CD4-positive, alpha-beta memory T cell (primary cell): ENCODE measurements at regions of chrX and their contacts with region 1.

Region 1: DNA sequence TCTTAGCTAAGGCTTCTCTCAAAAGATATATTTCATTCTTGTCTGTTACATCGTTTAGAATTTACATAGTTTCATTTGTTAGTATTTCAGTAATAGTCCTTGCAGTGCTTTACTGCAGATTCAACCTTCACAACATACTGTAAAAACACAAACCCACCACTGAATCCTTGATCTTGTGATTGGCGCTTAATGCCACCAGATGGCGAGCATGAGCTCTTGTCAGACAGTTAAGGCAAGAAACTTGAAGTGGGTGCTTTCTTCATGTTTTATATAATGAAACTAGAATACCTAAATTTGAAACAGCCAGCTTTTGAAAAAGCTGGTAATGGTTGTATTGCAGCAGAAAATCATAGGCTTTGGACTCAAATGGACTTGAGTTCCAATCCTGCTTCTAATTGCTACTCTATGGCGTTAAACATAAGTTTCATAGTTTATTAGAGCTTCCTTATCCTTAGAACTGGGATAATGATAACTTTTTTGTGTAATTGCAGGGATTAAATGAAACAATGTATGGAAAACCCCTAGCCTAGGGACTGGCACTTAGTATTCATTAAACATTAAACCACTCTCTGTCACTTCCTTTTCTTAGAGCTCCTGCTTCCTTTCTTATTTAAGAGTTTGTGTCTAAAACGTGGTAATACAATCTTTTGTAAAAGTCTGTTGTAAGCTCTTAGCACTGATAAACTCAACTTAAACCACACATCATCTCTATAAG is 95.1 kb downstream of the USP9X start:
- DNase-seq: peak; percentile 47 to 60 (median 55)
- H3K4me3 ChIP-seq: no peak overlapping the region
- H3K4me3 Mint-ChIP-seq: peak overlapping the region in 2 of 8 donors; percentile 30 to 32
- H3K27ac ChIP-seq: no peak overlapping the region
- H3K27ac Mint-ChIP-seq: peak overlapping the region in 6 of 7 donors; percentile 0 to 41 (median 28)
- H3K4me1 ChIP-seq: peaks cover 21% of the 10 kb centered on the region
- H3K4me1 Mint-ChIP-seq: peaks cover 32 to 48% (median 40%) of the 10 kb centered on the region in 4 donors
- H3K27me3 ChIP-seq: no peaks in the 10 kb centered on the region
- H3K27me3 Mint-ChIP-seq: no peaks in the 10 kb centered on the region

Region 2: DNA sequence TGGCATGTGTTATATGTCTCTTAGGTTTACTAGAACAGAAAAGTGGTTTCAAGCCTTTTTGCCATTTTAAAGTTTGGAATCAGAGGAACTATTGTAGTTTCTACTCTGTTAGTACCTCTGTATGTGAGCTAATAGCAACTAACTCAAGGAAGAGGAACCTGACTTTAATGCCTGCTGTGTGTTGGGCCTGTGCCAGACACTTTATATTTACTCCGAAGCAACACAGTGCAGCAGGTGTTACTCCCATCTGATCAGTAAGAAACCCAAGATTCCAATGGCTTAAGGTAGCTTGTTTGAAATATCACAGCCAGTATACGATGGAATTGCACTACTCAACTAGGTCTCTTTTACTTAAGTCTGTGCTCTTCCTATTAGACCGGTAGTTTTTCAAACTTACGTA is 15.9 kb before region 1 on chrX:
- CTCF ChIA-PET with region 1: interaction called, 20 read pairs
- POLR2A ChIA-PET with region 1: no interaction called
- intact Hi-C with region 1: no loop called
- DNase-seq: no peak
- H3K4me3 ChIP-seq: no peak overlapping the region
- H3K4me3 Mint-ChIP-seq: no peak overlapping the region
- H3K27ac ChIP-seq: no peak overlapping the region
- H3K27ac Mint-ChIP-seq: no peak overlapping the region
- H3K4me1 ChIP-seq: no peaks in the 10 kb centered on the region
- H3K4me1 Mint-ChIP-seq: peaks cover 0 to 5% (median under 1%) of the 10 kb centered on the region in 4 donors
- H3K27me3 ChIP-seq: no peaks in the 10 kb centered on the region
- H3K27me3 Mint-ChIP-seq: no peaks in the 10 kb centered on the region

Region 3: GRCh38 chrX:41250867-41251266 is 70.5 kb after region 1 on chrX:
- CTCF ChIA-PET with region 1: interaction called, 26 read pairs
- POLR2A ChIA-PET with region 1: no interaction called
- intact Hi-C with region 1: loop called (anchors 1 kb)
- DNase-seq: no peak
- H3K4me3 ChIP-seq: no peak overlapping the region
- H3K4me3 Mint-ChIP-seq: peak overlapping the region in 2 of 8 donors; percentile 12 to 48
- H3K27ac ChIP-seq: no peak overlapping the region
- H3K27ac Mint-ChIP-seq: no peak overlapping the region
- H3K4me1 ChIP-seq: peaks cover 4% of the 10 kb centered on the region
- H3K4me1 Mint-ChIP-seq: peaks cover 3 to 13% (median 5%) of the 10 kb centered on the region in 4 donors
- H3K27me3 ChIP-seq: no peaks in the 10 kb centered on the region
- H3K27me3 Mint-ChIP-seq: peaks cover 0 to 2% of the 10 kb centered on the region in 2 donors